ENCODE measurements at regions of chr1 and their contacts with region 1.

Region 1: GRCh38 chr1:41432481-41433280 is 51.8 kb downstream of the EDN2 start:
- DNase-seq: peak; percentile 94 to 97 (median 96)
- H3K4me3 ChIP-seq: no peak overlapping the region
- H3K27ac ChIP-seq: peak overlapping the region in 4 of 5 donors; percentile 44 to 75 (median 67)
- H3K4me1 ChIP-seq: peaks cover 10 to 23% of the 10 kb centered on the region in 2 donors
- H3K27me3 ChIP-seq: no peaks in the 10 kb centered on the region
- CTCF ChIP-seq: peak; percentile 89 to 99 (median 98)
- POLR2A ChIP-seq: no peak

Region 2: GRCh38 chr1:40979233-40980067 is 453.2 kb before region 1 on chr1 and contains the start of gene CTPS1:
- intact Hi-C with region 1: no loop called
- DNase-seq: peak; percentile 95 to 97 (median 97)
- H3K4me3 ChIP-seq: peak within 1 kb of the TSS; percentile 38 to 74 (median 48)
- H3K27ac ChIP-seq: peak within 1 kb of the TSS; percentile 80 to 94 (median 92)
- H3K4me1 ChIP-seq: peaks cover 21 to 42% of the 10 kb centered on the region in 2 donors
- H3K27me3 ChIP-seq: no peaks in the 10 kb centered on the region
- CTCF ChIP-seq: peak in 3 of 6 experiments; percentile 16 to 26 (median 24)
- POLR2A ChIP-seq: peak; percentile 36 to 86
- total RNA-seq, gene CTPS1: 12.2 to 37.5 (median 26.1) TPM

Region 3: DNA sequence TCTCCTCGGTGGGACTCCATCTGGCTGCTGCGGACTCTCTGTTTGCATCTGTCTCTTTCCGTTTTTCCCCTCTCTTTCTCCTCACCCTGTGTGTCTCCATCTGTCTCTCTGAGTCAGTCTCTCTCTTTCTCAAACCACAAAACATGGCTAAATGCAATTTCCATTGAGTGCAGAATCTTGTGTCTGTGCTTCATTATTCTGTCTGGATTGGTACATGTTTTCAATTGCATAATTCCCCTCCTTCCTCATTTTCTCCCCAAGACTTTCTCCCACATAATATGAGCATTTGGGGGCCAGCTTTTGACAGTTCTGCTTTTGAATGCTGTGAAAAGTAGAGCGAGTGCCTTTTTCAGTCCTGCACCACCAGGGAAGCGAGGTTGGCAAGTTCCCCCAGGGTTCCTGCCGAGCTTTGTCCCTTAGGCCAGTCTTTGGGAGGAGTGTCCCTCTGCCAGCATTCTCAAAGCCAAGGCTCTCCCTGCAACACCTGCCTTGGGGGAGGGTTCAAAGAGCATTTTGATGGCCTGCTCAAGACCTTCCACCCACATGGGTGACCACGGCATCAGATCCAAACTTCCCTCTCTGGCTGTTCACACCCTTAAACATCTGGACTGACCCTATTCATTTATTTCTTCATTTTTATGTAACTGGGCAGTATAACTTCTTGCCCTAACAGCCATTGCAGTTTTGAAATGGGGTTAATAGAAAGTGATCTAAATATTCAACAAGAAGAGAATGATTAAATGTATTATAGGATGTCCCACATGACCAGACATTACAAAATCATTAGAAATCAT is 157.7 kb before region 1 on chr1:
- intact Hi-C with region 1: loop called in 1 of 2 experiments (anchors 5 kb)
- DNase-seq: peak in 2 of 7 donors; percentile 10 to 23
- H3K4me3 ChIP-seq: no peak overlapping the region
- H3K27ac ChIP-seq: no peak overlapping the region
- H3K4me1 ChIP-seq: peaks cover 4 to 7% of the 10 kb centered on the region in 2 donors
- H3K27me3 ChIP-seq: no peaks in the 10 kb centered on the region
- CTCF ChIP-seq: no peak
- POLR2A ChIP-seq: no peak

Region 4: DNA sequence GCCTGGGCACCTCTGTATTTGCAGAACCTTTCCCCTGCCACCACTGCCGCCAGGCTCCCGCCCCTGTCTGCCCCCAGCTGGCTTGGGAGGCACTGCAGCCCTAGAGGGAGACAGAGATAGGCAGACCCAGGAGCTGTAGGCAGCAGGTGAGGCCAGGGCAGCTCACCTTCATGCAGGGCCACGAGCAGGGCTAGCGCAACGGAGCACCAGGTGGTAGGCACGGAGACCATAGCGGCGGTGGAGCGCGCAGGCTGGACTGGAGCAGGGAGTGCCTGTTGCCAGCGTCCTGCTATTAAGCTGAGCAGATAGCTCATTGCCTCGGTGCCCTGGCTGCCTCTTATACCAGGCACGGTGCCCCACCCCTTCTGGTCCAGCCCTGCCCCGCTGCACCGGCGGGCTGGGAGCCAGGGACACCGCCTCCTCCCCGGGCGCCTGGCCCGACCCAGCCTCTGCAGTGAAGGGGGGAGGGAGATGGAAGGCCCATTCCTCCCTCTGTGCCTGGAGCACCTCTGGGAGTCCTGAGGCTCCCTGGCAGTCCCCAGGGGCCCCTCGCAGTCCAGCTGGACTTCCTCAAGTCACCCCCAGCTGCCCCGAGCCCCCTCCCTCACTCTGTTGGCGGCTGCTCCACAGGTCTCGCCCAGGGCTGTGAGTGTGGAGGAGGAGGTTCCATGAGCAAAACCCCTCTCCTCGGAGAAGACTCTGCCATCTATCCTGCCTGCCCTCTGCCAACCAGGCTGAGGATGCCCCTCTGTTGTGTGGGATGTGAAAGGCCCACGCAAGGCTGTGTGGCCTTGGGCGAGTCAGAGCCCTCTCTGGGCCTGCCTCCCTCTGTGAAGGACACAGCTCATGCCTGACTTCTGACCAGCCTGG is 51.9 kb after region 1 on chr1 and contains the start of gene EDN2:
- intact Hi-C with region 1: no loop called
- DNase-seq: peak in 5 of 7 donors; percentile 57 to 72 (median 66)
- H3K4me3 ChIP-seq: no peak within 1 kb of the TSS
- H3K27ac ChIP-seq: no peak within 1 kb of the TSS
- H3K4me1 ChIP-seq: peaks cover 21 to 44% of the 10 kb centered on the region in 2 donors
- H3K27me3 ChIP-seq: no peaks in the 10 kb centered on the region
- CTCF ChIP-seq: peak in 2 of 6 experiments; percentile 23
- POLR2A ChIP-seq: no peak
- total RNA-seq, gene EDN2: 0.39 TPM in 1 of 9 donors, not detected in the others